ENCODE measurements at regions of chr22 and their contacts with region 1.

Region 1: GRCh38 chr22:22207845-22208564 is 36.6 kb upstream of the VPREB1 start:
- DNase-seq: peak; percentile 91
- H3K4me3 Mint-ChIP-seq: no peak overlapping the region
- H3K27ac Mint-ChIP-seq: peak overlapping the region; percentile 74
- H3K4me1 Mint-ChIP-seq: peaks cover 40% of the 10 kb centered on the region
- H3K27me3 Mint-ChIP-seq: peaks cover 13% of the 10 kb centered on the region

Region 2: GRCh38 chr22:22235558-22235957 is 27.6 kb after region 1 on chr22:
- CTCF ChIA-PET with region 1: interaction called, 262 read pairs
- DNase-seq: peak; percentile 74
- H3K4me3 Mint-ChIP-seq: no peak overlapping the region
- H3K27ac Mint-ChIP-seq: no peak overlapping the region
- H3K4me1 Mint-ChIP-seq: peaks cover 15% of the 10 kb centered on the region
- H3K27me3 Mint-ChIP-seq: no peaks in the 10 kb centered on the region

Region 3: DNA sequence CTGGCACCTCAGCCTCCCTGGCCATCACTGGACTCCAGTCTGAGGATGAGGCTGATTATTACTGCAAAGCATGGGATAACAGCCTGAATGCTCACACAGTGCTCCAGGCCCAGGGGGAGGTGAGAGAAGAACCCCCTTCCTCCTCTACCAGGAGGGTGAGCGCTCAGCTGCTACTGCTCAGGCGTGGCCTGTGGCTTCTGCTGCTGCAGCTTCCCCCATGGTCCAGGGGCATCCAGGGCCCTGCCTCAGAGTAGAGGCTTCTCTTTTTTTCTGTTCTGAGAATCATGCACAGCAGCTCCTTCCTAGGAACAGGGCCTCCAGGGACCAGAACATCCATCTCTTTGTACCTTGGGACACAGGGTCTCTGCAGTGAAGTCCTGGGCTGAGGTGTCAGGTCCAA is 119.7 kb after region 1 on chr22:
- CTCF ChIA-PET with region 1: interaction called, 13 read pairs
- DNase-seq: no peak
- H3K4me3 Mint-ChIP-seq: no peak overlapping the region
- H3K27ac Mint-ChIP-seq: no peak overlapping the region
- H3K4me1 Mint-ChIP-seq: peaks cover 5% of the 10 kb centered on the region
- H3K27me3 Mint-ChIP-seq: peaks cover 29% of the 10 kb centered on the region

Measured in activated naive CD4-positive, alpha-beta T cell treated with anti-CD3 and anti-CD28 coated beads, Interleukin-2, amount 10 ng/mL, durations not matched to agents 7 days and 5 days (primary cell).